ENCODE measurements at regions of chr11 and their contacts with region 1.

Region 1: DNA sequence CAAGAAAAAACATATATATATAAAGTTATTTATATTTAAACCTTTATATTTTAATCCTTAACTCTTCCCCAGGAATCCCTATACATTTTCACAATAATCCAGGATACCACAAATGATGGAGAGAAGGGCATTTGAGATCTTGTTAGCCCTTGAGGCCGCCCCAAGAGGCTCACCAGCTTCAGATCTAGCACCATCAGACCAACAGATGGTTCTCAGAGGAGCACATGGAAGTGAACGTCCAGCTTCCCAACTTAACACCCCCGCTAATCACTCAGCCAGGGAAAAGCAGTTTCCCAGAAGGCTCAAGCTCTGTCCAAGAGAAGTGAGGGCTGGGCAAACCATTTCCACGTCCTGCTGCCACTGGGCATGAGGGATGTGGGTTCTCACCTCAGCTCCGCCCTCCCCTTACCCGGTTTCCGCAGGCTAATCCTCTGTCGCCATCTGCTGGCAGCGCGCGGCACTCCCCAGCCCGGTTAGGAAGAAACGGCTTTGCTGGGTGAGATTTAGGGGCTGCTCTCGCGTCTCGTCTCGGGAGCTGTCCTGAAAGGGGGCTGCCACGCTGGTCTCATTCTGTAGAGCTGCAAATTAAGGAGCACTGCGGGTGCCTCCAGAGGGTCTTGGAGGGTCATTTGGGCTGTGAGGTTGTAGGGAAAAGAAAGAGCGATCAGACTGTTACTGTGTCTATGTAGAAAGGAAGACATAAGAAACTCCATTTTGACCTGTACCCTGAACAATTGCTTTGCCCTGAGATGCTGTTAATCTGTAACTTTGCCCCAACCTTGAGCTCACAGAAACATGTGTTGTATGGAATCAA is 6.8 kb upstream of the FAM111A start:
- DNase-seq: peak; percentile 93
- ATAC-seq: peak; percentile 100
- H3K4me3 Mint-ChIP-seq: peak overlapping the region; percentile 11
- H3K27ac Mint-ChIP-seq: peak overlapping the region; percentile 61
- H3K4me1 Mint-ChIP-seq: peaks cover 5% of the 10 kb centered on the region
- H3K27me3 Mint-ChIP-seq: no peaks in the 10 kb centered on the region

Region 2: DNA sequence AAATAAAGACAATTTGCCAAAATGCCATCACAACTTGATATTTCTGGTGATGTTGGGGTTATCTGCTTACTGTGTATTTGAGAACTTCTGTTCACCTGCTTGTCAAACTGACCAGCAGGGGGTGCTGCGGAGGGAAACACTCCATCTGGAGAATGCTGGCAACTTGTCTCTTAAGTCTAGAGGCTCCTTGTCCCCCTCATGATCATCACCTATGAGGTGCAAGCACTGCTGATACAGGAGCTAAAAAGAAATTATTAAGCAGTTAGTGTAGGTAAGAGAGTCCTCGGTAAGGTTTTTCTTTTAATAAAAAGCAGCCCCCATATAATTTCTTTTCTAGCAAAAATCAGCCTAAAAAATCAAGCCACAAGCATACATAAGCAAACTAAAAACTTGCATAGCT is 82.5 kb before region 1 on chr11:
- CTCF ChIA-PET with region 1: interaction called, 38 read pairs
- POLR2A ChIA-PET with region 1: no interaction called
- intact Hi-C with region 1: loop called (anchors 1 kb)
- DNase-seq: peak; percentile 89
- ATAC-seq: peak; percentile 75
- H3K4me3 Mint-ChIP-seq: no peak overlapping the region
- H3K27ac Mint-ChIP-seq: no peak overlapping the region
- H3K4me1 Mint-ChIP-seq: peaks cover 6% of the 10 kb centered on the region
- H3K27me3 Mint-ChIP-seq: peaks cover 9% of the 10 kb centered on the region

Region 3: GRCh38 chr11:59097113-59097708 is 38.6 kb before region 1 on chr11:
- CTCF ChIA-PET with region 1: interaction called, 33 read pairs
- POLR2A ChIA-PET with region 1: no interaction called
- intact Hi-C with region 1: loop called (anchors 1 kb)
- DNase-seq: peak; percentile 79
- ATAC-seq: peak; percentile 77
- H3K4me3 Mint-ChIP-seq: no peak overlapping the region
- H3K27ac Mint-ChIP-seq: no peak overlapping the region
- H3K4me1 Mint-ChIP-seq: peaks cover 9% of the 10 kb centered on the region
- H3K27me3 Mint-ChIP-seq: peaks cover 21% of the 10 kb centered on the region

Region 4: GRCh38 chr11:59152312-59152951 is 16.6 kb after region 1 on chr11:
- CTCF ChIA-PET with region 1: interaction called, 130 read pairs
- POLR2A ChIA-PET with region 1: no interaction called
- intact Hi-C with region 1: no loop called
- DNase-seq: peak; percentile 58
- ATAC-seq: peak; percentile 97
- H3K4me3 Mint-ChIP-seq: peak overlapping the region; percentile 45
- H3K27ac Mint-ChIP-seq: peak overlapping the region; percentile 93
- H3K4me1 Mint-ChIP-seq: peaks cover 38% of the 10 kb centered on the region
- H3K27me3 Mint-ChIP-seq: no peaks in the 10 kb centered on the region

Measured in activated CD4-positive, alpha-beta T cell treated with anti-CD3 and anti-CD28 coated beads for 36 hours (primary cell).